CD4-positive, alpha-beta memory T cell (primary cell): ENCODE measurements at regions of chr22 and their contacts with region 1.

Region 1: DNA sequence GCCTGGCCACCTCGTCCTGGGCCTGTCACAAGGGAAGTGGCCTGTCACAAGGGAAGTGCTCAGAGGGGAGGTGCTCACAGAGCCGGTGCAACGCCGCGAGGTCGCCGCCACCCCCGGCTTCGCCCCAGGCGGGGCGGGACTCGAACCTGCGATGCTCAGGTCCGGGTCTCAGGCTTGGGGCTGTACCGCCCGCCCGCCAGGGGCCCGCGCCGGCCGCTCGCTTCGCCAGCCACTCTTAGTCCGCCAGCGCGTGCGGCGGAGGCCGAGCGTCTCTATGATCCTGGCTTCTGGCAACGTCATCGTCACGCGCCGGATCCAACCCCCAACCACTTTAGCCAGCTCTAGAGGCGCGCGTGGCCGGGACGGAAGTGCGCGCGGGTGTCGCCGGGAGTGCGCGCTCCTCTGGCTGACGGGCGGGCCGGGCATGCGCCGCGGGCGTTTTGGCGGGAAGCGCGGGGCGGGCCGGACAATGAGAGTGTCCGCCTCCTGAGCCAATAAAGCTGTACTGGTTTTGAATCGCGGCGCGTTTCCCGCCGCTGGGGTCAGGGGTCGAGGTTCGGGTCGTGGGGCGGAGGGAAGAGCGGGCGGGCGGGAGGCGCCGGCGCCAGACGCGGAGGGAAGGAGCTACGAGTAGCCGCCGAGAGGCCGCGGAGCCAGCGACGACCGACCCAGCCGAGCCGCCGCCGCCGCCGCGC is at the start of gene TRMT2A:
- DNase-seq: peak; percentile 96 to 98 (median 97)
- H3K4me3 ChIP-seq: peak within 1 kb of the TSS; percentile 81 to 82
- H3K4me3 Mint-ChIP-seq: peak within 1 kb of the TSS; percentile 85 to 93 (median 92)
- H3K27ac ChIP-seq: peak within 1 kb of the TSS; percentile 85
- H3K27ac Mint-ChIP-seq: peak within 1 kb of the TSS; percentile 93 to 96 (median 95)
- H3K4me1 ChIP-seq: peaks cover 49% of the 10 kb centered on the region
- H3K4me1 Mint-ChIP-seq: peaks cover 14 to 53% (median 31%) of the 10 kb centered on the region in 4 donors
- H3K27me3 ChIP-seq: no peaks in the 10 kb centered on the region
- H3K27me3 Mint-ChIP-seq: no peaks in the 10 kb centered on the region
- total RNA-seq, gene TRMT2A: 110 to 126 TPM

Region 2: DNA sequence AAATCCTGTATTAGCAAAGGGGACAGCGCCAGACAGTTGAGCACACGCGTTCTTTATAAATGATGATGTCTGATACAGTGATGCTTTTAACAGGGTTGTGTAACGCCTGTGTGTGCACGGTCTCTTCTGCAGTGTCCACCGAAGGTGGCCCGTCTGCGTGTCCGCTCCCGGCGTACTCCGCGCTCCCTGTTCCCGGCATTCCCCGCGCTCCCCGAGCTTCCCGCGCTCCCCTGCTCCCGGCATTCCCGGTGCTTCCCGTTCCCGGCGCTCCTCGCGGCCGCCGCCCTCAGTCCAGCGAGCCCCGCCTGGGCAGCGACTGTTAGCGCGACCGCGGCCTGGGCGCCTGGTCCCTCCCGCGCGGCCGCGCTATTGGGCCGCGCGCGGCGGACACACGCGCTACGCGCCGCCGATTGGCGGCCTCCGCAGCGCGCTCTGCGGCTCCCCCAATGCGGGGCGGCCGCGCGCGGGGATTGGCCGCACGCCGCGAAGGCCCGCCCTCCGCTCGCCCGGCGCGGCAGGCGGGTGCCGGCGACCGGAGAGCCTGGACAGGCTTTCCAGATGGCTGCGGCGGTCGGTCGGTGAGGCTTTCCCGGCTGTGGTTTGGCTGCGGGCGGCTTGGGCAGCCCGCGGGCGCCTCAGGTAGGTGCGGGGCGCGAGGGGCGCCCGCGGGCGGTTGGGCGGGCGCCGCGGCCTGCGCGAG is 37.2 kb before region 1 on chr22 and contains the start of gene DGCR8:
- CTCF ChIA-PET with region 1: no interaction called
- POLR2A ChIA-PET with region 1: interaction called, 14 read pairs
- intact Hi-C with region 1: loop called (anchors 1 kb)
- DNase-seq: peak; percentile 52 to 83 (median 79)
- H3K4me3 ChIP-seq: peak within 1 kb of the TSS; percentile 80 to 86
- H3K4me3 Mint-ChIP-seq: peak within 1 kb of the TSS; percentile 87 to 99 (median 94)
- H3K27ac ChIP-seq: peak within 1 kb of the TSS; percentile 80
- H3K27ac Mint-ChIP-seq: peak within 1 kb of the TSS; percentile 85 to 97 (median 91)
- H3K4me1 ChIP-seq: peaks cover 52% of the 10 kb centered on the region
- H3K4me1 Mint-ChIP-seq: peaks cover 27 to 47% (median 39%) of the 10 kb centered on the region in 4 donors
- H3K27me3 ChIP-seq: no peaks in the 10 kb centered on the region
- H3K27me3 Mint-ChIP-seq: no peaks in the 10 kb centered on the region
- total RNA-seq, gene DGCR8: 47.6 to 48.2 TPM

Region 3: DNA sequence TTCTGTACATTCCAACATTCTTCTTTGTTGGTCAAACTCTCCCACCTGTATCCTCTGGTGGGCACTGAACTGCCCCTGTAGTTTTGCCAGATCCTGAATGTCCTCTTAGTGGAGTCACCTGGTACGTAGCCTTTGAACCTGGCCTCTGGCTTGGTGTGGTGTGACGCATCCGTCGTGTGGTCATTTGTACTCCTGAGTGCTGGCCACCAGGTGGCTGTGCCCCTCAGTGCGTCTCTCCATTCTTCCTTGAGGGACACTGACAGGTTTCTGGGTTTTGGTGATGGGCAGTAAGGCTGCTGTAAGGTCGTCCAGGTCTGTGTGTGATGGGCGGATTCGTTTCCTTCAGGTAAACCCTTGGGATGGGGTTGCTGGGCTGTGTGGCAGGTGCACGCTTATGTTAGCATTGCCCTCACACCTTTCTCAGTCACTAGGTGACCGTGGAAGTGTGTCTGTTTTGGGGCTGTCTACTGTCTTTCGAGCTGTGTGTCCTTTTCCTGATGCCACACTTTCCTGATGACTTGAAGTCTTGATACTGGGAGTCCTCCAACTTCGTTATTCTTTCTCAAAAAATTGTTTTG is 14.8 kb before region 1 on chr22:
- CTCF ChIA-PET with region 1: no interaction called
- POLR2A ChIA-PET with region 1: interaction called, 7 read pairs
- intact Hi-C with region 1: loop called (anchors 1 kb)
- DNase-seq: no peak
- H3K4me3 ChIP-seq: no peak overlapping the region
- H3K4me3 Mint-ChIP-seq: peak overlapping the region in 1 of 8 donors; percentile 35
- H3K27ac ChIP-seq: no peak overlapping the region
- H3K27ac Mint-ChIP-seq: peak overlapping the region; percentile 8 to 98 (median 84)
- H3K4me1 ChIP-seq: peaks cover 30% of the 10 kb centered on the region
- H3K4me1 Mint-ChIP-seq: peaks cover 24 to 43% (median 34%) of the 10 kb centered on the region in 4 donors
- H3K27me3 ChIP-seq: no peaks in the 10 kb centered on the region
- H3K27me3 Mint-ChIP-seq: no peaks in the 10 kb centered on the region

Region 4: GRCh38 chr22:20319745-20320658 is 202.9 kb after region 1 on chr22 and contains the start of gene DGCR6L:
- CTCF ChIA-PET with region 1: no interaction called
- POLR2A ChIA-PET with region 1: interaction called, 8 read pairs
- intact Hi-C with region 1: loop called (anchors 1 kb)
- DNase-seq: peak; percentile 95 to 97 (median 96)
- H3K4me3 ChIP-seq: peak within 1 kb of the TSS; percentile 82 to 92
- H3K4me3 Mint-ChIP-seq: peak within 1 kb of the TSS; percentile 89 to 95 (median 91)
- H3K27ac ChIP-seq: peak within 1 kb of the TSS; percentile 81
- H3K27ac Mint-ChIP-seq: peak within 1 kb of the TSS; percentile 84 to 97 (median 91)
- H3K4me1 ChIP-seq: peaks cover 58% of the 10 kb centered on the region
- H3K4me1 Mint-ChIP-seq: peaks cover 35 to 70% (median 53%) of the 10 kb centered on the region in 4 donors
- H3K27me3 ChIP-seq: no peaks in the 10 kb centered on the region
- H3K27me3 Mint-ChIP-seq: no peaks in the 10 kb centered on the region
- total RNA-seq, gene DGCR6L: 39.9 to 44.6 TPM